AG04450 (cell line): ENCODE measurements at regions of chr2 and their contacts with region 1.

Region 1: DNA sequence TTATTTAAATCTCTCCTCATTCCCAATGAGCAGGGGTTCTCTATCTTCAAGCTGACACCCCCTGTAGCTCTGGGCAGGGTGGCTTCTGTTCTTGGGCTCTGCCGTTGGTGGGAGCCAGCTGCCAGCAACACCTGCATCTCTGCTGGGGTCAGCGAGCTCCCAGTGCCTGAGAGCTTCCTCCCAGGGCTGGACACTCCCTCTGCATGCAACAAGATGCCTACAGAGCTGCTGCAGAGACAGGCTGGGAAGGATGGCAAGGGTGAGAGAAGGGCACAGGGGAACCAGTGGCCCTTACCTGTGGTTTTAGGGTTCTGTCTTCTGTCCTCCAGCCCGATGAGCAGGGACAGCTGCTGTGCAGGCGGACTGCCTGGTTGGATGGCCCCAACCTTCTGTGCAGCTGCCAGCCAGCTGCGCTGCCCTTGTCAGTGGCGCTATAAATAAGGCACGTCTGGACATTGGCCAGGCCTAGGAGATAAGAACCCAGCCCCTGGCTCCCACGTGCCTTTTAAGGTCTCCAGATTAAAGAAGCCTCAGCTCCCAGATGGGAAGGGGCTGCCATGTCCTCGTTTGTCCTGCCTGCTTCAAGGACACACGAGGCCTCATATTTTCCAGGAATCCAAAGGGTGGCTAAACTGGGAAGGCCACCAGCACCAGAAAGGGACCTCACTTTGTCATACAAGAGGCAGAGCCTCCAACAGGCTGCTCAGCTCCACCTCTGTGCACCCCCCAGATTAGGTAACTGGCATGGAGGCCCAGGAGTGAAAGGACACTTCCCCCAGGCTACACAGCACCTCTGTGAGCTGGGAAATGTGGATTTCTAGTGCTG is 39.5 kb upstream of the FHL2 start:
- DNase-seq: no peak
- H3K4me3 ChIP-seq: peak overlapping the region; percentile 36
- H3K27ac ChIP-seq: peak overlapping the region; percentile 89
- H3K27me3 ChIP-seq: no peaks in the 10 kb centered on the region
- CTCF ChIP-seq: no peak

Region 2: GRCh38 chr2:105398699-105399432 is 39.5 kb before region 1 on chr2 and contains the start of gene FHL2:
- CTCF ChIA-PET with region 1: interaction called, 4 read pairs
- POLR2A ChIA-PET with region 1: interaction called, 11 read pairs
- DNase-seq: peak; percentile 59
- H3K4me3 ChIP-seq: peak within 1 kb of the TSS; percentile 99
- H3K27ac ChIP-seq: peak within 1 kb of the TSS; percentile 98
- H3K27me3 ChIP-seq: no peaks in the 10 kb centered on the region
- CTCF ChIP-seq: peak; percentile 46
- polyA plus RNA-seq, gene FHL2: 497 and 555 TPM in 2 replicates

Region 3: DNA sequence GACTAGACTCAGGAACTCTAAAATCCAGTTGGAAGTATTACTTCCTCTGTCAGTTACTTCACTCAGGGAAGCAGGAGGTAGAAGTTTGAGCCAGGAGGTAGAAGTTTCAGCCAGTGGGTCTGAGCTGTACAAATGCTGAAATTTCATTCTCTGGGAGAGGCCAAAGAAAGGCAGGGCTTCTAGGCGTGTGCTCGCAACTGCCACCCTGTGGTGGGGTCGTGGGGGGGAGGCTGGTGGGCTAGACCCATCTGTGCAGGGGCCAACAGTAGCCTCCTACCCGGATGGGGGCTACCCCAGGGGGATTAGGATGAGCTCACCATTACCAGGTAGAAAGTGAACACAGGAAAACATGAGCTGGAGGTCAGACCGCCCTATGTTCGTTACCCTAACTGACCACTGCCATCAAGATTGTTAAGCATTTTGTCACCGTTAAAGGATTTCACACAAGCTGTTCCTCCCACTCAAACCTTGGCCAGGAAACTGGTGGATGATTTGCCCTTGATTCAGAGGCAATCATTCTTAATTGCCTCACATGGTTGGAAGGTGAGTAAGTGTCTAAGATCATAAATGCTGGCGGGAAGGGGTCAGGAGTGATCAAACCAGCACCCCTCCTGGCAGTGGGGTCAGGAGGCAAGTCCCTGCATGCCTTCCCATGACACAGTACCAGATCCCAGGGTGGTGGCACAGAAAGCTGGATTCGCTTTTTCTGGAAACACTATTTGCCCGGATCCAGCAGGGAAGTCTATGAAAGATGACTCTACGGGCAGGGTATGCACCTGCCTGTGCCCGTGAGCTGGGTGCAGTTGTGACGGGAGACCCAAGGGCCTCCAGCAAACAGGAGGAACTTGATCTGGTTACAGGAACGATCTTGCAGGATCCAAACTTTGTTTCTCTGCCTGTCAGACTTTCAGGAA is 34.3 kb before region 1 on chr2:
- CTCF ChIA-PET with region 1: interaction called, 3 read pairs
- POLR2A ChIA-PET with region 1: interaction called, 10 read pairs
- DNase-seq: peak; percentile 62
- H3K4me3 ChIP-seq: no peak overlapping the region
- H3K27ac ChIP-seq: peak overlapping the region; percentile 81
- H3K27me3 ChIP-seq: no peaks in the 10 kb centered on the region
- CTCF ChIP-seq: peak; percentile 51

Region 4: DNA sequence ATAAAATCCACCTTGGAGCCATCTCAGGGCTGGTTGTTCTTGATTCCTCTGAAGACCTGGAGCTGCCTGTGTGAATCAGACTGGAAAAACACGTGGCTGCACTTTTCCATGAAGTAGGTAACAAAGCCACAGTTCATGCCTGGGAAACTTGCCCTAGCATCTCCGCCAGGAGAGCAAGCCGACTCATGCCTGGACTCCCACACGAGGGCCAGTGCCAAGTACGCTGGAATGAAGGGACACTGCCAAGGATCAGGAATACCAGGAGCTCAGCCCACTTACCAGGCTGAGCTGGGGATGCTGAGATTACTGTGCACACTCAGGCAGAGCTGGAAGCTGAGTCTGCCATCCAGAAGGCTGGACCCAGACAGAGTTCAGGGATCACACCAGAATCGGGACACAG is 28.6 kb before region 1 on chr2:
- CTCF ChIA-PET with region 1: no interaction called
- POLR2A ChIA-PET with region 1: interaction called, 10 read pairs
- DNase-seq: peak; percentile 66
- H3K4me3 ChIP-seq: no peak overlapping the region
- H3K27ac ChIP-seq: no peak overlapping the region
- H3K27me3 ChIP-seq: no peaks in the 10 kb centered on the region
- CTCF ChIP-seq: no peak

Region 5: DNA sequence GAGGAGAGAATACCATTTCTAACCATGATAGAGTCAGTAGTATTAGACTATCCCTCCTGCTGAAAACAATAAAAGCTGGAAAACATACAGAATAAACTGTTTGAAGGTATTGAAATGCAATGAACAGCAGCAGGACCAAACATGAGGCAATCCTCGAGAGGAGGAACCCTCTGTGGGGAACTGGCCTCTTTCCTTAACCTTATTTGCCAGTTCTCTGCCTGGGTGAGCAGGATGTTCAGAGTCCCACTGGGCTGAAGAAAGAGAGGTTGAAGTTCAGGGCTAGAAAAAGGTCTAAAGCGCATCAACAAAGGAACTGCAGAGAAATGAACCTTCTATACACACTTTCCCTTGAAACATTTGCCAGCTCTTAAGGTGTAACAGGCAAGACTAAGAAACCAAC is 40.4 kb after region 1 on chr2:
- CTCF ChIA-PET with region 1: no interaction called
- POLR2A ChIA-PET with region 1: no interaction called
- DNase-seq: no peak
- H3K4me3 ChIP-seq: no peak overlapping the region
- H3K27ac ChIP-seq: no peak overlapping the region
- H3K27me3 ChIP-seq: peaks cover 22% of the 10 kb centered on the region
- CTCF ChIP-seq: no peak